ENCODE measurements at regions of chr18 and their contacts with region 1.

Region 1: GRCh38 chr18:23972416-23972815 is 42.1 kb upstream of the TTC39C start:
- DNase-seq: peak; percentile 55
- H3K4me3 Mint-ChIP-seq: no peak overlapping the region
- H3K27ac Mint-ChIP-seq: no peak overlapping the region
- H3K4me1 Mint-ChIP-seq: peaks cover 53% of the 10 kb centered on the region
- H3K27me3 Mint-ChIP-seq: no peaks in the 10 kb centered on the region

Region 2: GRCh38 chr18:23943104-23943503 is 29.3 kb before region 1 on chr18:
- CTCF ChIA-PET with region 1: interaction called, 3 read pairs
- intact Hi-C with region 1: loop called (anchors 1 kb)
- DNase-seq: peak; percentile 69
- H3K4me3 Mint-ChIP-seq: peak overlapping the region; percentile 1
- H3K27ac Mint-ChIP-seq: no peak overlapping the region
- H3K4me1 Mint-ChIP-seq: peaks cover 27% of the 10 kb centered on the region
- H3K27me3 Mint-ChIP-seq: peaks cover 2% of the 10 kb centered on the region

Region 3: DNA sequence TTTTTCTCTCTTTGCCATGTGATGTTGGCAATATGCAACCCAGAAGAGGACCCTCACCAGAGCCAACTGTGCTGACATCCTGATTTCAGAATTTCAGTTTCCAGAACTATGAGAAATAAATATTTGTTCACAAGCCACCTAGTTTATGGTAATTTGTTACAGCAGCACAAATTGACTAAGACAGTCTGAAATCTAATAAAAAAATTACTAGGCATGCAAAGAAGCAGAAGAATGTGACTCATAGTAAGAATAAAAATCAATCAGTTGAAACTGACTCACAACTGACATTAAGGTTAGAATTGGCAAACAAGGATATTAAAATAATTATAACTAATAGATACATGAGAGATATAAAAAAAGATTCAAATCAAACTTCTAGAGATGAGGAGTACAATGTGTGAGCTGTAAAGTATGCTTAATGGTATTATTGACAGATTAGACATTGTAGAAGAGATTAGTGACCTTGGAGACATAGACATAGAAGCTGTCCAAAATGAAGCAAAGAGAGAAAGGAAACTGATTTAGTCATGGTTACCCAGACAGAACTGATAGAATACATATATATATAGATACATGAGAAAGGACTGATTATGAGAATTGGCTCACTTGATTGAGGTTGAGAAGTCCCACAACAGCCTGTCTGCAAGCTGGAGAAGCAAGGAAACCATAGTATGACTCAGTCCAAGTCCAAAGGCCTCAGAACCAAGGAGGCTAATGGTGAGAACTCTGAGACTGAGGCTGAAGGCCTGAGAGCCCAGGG is 14.4 kb after region 1 on chr18:
- CTCF ChIA-PET with region 1: interaction called, 4 read pairs
- intact Hi-C with region 1: loop called (anchors 1 kb)
- DNase-seq: peak; percentile 25
- H3K4me3 Mint-ChIP-seq: no peak overlapping the region
- H3K27ac Mint-ChIP-seq: peak overlapping the region; percentile 60
- H3K4me1 Mint-ChIP-seq: peaks cover 46% of the 10 kb centered on the region
- H3K27me3 Mint-ChIP-seq: no peaks in the 10 kb centered on the region

Region 4: DNA sequence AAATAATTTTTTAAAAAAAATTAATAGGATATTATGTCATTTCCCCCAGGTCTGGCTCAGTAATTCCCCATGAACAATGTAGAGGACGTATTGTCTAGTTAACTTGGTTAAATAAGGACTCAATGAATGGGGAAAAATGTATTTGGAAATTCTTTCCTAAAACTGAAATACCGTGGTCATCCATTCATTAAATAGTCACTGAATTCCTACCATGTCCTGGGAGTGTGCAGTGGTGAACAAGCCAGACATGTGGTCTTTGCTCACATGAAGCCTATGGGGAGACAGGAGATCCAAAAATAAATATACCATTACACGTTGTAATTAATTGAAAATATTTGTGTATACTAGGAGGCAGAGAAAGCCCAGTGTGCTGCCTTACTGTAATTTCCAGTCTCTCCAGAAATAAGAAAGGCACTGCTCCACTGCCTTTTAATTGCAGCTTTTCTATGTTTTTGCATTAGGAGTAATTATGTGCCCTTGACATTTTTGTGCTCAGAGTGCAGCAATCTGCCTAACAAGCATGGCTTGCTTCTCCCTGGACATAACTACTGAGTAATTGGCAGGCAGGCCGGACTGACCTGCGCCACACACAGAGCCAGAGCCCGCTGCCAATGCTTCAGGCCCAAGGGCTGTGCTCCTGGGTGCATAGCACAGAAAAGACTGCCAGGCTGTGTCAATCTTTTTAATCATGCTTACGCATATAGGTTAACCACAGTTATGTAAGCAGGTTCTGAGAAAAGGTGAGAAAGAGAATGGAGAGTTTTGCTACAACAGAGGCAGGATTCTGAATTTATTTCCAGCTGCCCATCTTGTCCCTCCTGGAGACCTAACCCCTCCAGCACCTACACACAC is 19.9 kb after region 1 on chr18:
- CTCF ChIA-PET with region 1: interaction called, 4 read pairs
- intact Hi-C with region 1: loop called (anchors 1 kb)
- DNase-seq: peak; percentile 58
- H3K4me3 Mint-ChIP-seq: no peak overlapping the region
- H3K27ac Mint-ChIP-seq: no peak overlapping the region
- H3K4me1 Mint-ChIP-seq: peaks cover 50% of the 10 kb centered on the region
- H3K27me3 Mint-ChIP-seq: no peaks in the 10 kb centered on the region

Region 5: DNA sequence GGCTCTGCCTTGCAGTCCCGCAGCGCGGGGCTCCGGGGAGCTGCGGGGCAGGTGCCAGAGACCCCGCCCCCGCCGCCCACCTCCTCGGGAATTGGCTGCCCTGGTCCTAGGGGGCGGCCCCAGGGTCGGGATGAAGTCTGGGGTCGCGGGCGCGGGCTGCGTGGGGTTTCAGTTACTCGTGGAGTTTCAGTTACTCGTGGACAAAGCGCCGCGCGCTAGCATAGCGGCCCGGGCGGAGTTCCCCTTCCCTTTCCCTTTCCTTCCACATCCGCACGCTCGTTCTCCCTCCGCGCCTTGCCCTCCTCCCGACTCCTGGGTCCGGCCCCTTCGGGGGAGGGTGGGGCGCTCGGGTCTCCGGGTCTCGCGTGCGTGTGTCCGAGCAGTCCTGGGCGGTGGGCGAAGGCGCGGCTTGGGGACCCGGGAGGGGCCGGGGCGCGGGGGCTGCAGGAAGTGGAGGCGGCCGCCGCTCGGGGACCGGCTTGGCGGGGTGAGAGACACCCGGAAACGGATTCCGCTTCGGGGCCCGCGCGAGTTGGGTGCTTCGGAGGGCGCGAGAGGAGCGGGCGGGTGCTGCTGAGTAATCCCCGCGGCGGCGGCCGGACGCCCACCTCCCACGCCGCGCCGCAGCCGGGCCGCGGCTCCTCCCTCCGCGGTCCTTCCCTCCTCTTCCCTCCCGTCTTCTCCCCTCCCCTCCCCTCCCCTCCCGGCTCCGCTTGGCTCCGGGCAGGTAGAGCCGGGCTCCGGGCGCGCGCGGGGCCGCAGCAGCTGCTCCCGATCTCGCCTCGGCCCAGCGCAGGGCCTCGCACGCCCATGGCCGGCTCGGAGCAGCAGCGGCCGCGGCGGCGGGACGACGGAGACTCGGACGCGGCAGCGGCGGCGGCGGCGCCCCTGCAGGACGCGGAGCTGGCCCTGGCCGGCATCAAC is 41.9 kb after region 1 on chr18 and contains the start of gene TTC39C:
- CTCF ChIA-PET with region 1: interaction called, 3 read pairs
- intact Hi-C with region 1: loop called (anchors 1 kb)
- DNase-seq: peak; percentile 87
- H3K4me3 Mint-ChIP-seq: peak within 1 kb of the TSS; percentile 91
- H3K27ac Mint-ChIP-seq: peak within 1 kb of the TSS; percentile 89
- H3K4me1 Mint-ChIP-seq: peaks cover 69% of the 10 kb centered on the region
- H3K27me3 Mint-ChIP-seq: no peaks in the 10 kb centered on the region
- total RNA-seq, gene TTC39C: 39.9 to 44.2 TPM

Region 6: GRCh38 chr18:24019641-24020331 is 47.4 kb after region 1 on chr18:
- CTCF ChIA-PET with region 1: interaction called, 3 read pairs
- intact Hi-C with region 1: loop called (anchors 1 kb)
- DNase-seq: peak; percentile 81
- H3K4me3 Mint-ChIP-seq: peak overlapping the region; percentile 64
- H3K27ac Mint-ChIP-seq: peak overlapping the region; percentile 94
- H3K4me1 Mint-ChIP-seq: peaks cover 83% of the 10 kb centered on the region
- H3K27me3 Mint-ChIP-seq: no peaks in the 10 kb centered on the region

Region 7: DNA sequence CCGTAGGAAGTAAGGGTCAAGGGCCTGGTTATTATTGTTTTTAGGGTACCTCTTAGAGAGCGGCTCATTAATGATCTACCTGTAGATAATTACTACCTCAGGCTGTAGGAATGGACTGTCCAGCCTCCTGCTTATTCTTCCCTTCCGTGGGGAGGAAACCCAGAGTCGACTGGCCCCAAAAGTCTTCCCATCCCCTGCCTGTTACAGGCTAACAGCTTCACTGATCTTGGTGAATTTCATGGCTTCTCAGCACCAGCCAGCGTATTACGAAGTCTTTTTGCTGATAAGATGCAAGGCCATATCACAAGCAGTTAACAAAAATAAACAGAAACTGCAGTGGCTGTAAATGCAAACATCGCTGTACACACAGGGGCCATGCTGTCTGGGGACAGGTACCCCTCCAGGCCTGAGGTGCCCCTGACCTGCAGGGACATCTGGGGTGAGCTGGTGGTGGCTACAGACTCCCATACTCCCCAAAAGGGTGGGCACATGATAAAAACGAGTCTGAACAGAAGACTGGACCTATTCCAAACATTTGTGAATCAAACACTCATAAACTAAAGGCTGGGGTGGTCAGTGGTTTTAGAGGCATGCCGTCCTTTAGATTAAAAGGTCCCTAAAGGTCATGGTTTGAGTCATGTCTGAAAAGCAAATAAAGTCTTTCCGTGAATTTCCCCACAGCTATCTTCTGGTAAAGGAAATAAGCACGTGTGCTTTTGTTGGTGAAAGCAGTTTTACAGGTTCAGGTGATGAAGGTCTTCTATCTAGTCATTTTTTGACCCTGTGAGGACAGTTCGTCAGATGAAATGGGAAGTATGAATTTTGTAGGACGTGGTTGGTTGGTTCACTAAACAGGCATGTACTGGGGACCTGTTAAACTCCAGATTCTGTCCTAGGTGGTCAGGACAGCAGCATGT is 78.9 kb after region 1 on chr18:
- CTCF ChIA-PET with region 1: no interaction called
- intact Hi-C with region 1: loop called (anchors 1 kb)
- DNase-seq: no peak
- H3K4me3 Mint-ChIP-seq: peak overlapping the region; percentile 5
- H3K27ac Mint-ChIP-seq: peak overlapping the region; percentile 72
- H3K4me1 Mint-ChIP-seq: peaks cover 75% of the 10 kb centered on the region
- H3K27me3 Mint-ChIP-seq: no peaks in the 10 kb centered on the region

Region 8: DNA sequence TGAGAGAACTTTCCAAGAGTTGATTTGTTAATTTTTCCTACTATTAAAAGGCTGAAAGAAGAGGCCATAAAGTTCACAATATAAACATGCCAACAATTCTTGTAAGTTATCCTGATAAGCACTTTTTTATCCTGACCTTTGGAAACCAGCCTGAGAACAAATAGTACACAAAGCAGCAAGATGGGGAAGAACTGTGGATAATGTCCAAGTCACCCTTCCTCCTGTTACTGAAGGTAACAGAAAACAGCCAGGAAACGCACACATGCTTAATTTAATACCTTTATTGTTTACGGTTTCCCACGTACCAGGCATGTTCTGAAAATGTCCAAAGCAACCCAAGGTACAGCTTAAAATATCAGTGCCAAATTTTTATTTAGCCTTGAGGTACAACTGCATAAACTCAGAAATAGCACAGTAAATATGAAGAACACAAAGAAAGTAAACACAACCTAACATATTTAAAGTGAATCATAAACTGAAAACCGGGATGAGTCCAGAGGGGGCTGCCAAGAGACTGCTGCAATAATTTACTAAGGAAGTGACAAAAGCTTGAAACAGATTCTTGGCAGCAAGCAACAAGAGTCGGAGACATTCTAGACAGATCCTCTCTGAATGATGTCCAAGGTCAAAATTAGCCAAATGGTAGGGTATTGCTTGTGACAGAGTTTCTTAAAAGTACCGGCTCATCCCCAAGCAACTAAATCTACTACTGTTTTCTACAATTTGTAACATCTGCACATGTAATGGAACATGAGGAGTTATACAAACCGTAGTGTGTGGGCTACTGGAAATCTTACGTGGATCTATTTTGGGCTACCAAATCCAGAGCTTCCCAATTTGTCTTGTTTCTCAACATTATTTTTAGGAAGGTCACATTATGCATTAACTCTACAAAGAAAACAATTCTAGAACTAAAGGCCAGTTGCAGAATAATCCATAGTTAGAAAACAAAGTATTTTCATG is 259.6 kb after region 1 on chr18:
- CTCF ChIA-PET with region 1: no interaction called
- intact Hi-C with region 1: no loop called
- DNase-seq: no peak
- H3K4me3 Mint-ChIP-seq: no peak overlapping the region
- H3K27ac Mint-ChIP-seq: no peak overlapping the region
- H3K4me1 Mint-ChIP-seq: no peaks in the 10 kb centered on the region
- H3K27me3 Mint-ChIP-seq: peaks cover 2% of the 10 kb centered on the region

Measured in activated naive CD4-positive, alpha-beta T cell treated with anti-CD3 and anti-CD28 coated beads for 36 hours (primary cell).